ENCODE measurements at regions of chr1 and their contacts with region 1.

Region 1: DNA sequence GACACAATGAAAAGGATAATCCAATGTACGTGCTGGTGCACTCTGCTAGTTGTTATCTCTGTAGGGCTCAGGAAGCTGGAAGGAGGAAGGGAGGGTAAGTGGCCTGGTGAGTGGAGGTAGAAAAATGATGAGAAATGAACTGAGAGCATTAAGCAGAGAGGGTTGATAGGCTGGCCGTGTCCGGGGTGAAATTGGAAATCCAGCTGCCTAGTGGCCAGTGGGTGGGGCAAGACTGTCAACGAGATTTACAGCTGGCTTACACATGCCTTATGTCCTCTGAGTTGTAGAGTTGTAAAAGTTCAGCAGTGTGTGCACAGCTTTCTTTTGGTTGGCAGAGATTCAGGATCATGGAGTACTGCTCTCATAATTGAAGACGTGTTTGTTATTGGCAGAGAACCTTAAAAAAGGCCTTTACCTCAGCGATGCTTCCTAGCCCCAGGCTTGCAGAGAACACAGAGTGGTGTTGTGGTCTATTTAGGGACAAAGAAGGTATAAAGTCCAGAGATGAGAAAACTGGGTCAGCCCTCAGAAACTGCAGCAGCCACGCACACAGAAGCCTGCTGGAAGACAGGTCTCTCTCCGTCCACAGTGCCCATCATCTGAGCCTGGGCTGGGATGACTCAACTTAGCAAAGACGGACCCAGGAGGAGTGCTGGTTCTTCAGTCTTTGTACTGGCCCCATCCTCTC is 132.4 kb downstream of the EDEM3 start:
- DNase-seq: peak; percentile 95
- H3K4me3 ChIP-seq: no peak overlapping the region
- H3K27ac ChIP-seq: peak overlapping the region; percentile 94 to 95
- H3K4me1 ChIP-seq: peaks cover 40% of the 10 kb centered on the region
- H3K27me3 ChIP-seq: no peaks in the 10 kb centered on the region
- CTCF ChIP-seq: peak in 3 of 4 experiments; percentile 20 to 60 (median 21)
- POLR2A ChIP-seq: peak; percentile 24

Region 2: GRCh38 chr1:183942933-183943693 is 679.2 kb before region 1 on chr1:
- intact Hi-C with region 1: no loop called
- DNase-seq: no peak
- H3K4me3 ChIP-seq: no peak overlapping the region
- H3K27ac ChIP-seq: no peak overlapping the region
- H3K4me1 ChIP-seq: no peaks in the 10 kb centered on the region
- H3K27me3 ChIP-seq: no peaks in the 10 kb centered on the region
- CTCF ChIP-seq: no peak
- POLR2A ChIP-seq: no peak

Region 3: GRCh38 chr1:184386312-184387068 is 235.8 kb before region 1 on chr1 and contains the start of gene C1orf21:
- intact Hi-C with region 1: loop called (anchors 5 kb)
- DNase-seq: peak; percentile 93
- H3K4me3 ChIP-seq: peak within 1 kb of the TSS; percentile 98
- H3K27ac ChIP-seq: peak within 1 kb of the TSS; percentile 93 to 94
- H3K4me1 ChIP-seq: no peaks in the 10 kb centered on the region
- H3K27me3 ChIP-seq: no peaks in the 10 kb centered on the region
- CTCF ChIP-seq: peak in 1 of 4 experiments; percentile 5
- POLR2A ChIP-seq: peak; percentile 95
- total RNA-seq, gene C1orf21: 28.8 to 79.3 TPM

Region 4: DNA sequence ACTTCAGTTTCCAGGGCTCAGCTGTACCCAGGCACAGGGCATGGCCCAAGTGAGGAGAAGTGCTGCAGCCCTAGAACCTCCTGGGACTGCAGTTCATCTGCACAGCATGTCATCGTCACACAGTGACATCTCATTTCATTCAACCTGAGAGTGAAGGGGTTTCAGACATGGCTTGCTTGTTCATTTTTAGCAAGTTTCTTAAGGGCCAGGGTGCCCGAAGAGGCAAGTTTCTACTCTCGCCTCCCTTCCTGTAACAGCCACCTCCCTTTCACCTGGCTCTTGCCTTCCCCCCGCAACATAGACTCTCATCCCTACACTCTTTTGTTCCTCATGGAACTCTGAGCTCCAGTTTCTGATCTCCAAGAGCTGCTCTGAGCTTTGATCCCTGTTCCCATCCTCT is 127.4 kb before region 1 on chr1:
- intact Hi-C with region 1: loop called (anchors 5 kb)
- DNase-seq: no peak
- H3K4me3 ChIP-seq: no peak overlapping the region
- H3K27ac ChIP-seq: no peak overlapping the region
- H3K4me1 ChIP-seq: peaks cover 5% of the 10 kb centered on the region
- H3K27me3 ChIP-seq: no peaks in the 10 kb centered on the region
- CTCF ChIP-seq: no peak
- POLR2A ChIP-seq: no peak

Region 5: DNA sequence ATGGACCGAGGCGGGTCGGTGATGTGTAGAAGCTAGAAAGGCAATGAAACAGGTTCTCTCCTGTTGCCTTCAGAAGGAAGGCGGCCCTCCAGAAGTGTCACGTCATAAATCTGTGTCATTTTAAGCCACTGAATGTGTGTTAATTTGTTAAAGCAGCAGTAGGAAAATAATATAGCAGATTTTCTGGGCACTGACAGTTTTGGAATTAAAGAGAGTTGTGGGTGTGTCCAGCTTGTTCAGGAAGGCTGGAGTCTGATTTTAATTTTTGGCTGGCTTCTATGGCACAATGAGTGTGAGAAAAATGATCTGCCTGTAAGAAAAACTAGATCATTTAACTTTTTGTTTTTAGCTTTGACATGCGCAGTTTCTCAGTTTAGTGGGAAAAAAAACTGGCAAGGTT is 45.0 kb before region 1 on chr1:
- intact Hi-C with region 1: loop called (anchors 5 kb)
- DNase-seq: no peak
- H3K4me3 ChIP-seq: no peak overlapping the region
- H3K27ac ChIP-seq: peak overlapping the region; percentile 5 to 36
- H3K4me1 ChIP-seq: peaks cover 1% of the 10 kb centered on the region
- H3K27me3 ChIP-seq: no peaks in the 10 kb centered on the region
- CTCF ChIP-seq: no peak
- POLR2A ChIP-seq: no peak

Region 6: GRCh38 chr1:184664042-184664655 is 41.9 kb after region 1 on chr1:
- intact Hi-C with region 1: loop called (anchors 5 kb)
- DNase-seq: peak; percentile 73
- H3K4me3 ChIP-seq: peak overlapping the region in 1 of 2 donors; percentile 14
- H3K27ac ChIP-seq: peak overlapping the region; percentile 34 to 47
- H3K4me1 ChIP-seq: peaks cover 15% of the 10 kb centered on the region
- H3K27me3 ChIP-seq: no peaks in the 10 kb centered on the region
- CTCF ChIP-seq: peak; percentile 82 to 90 (median 86)
- POLR2A ChIP-seq: no peak